ENCODE measurements at regions of chr6 and their contacts with region 1.

Region 1: DNA sequence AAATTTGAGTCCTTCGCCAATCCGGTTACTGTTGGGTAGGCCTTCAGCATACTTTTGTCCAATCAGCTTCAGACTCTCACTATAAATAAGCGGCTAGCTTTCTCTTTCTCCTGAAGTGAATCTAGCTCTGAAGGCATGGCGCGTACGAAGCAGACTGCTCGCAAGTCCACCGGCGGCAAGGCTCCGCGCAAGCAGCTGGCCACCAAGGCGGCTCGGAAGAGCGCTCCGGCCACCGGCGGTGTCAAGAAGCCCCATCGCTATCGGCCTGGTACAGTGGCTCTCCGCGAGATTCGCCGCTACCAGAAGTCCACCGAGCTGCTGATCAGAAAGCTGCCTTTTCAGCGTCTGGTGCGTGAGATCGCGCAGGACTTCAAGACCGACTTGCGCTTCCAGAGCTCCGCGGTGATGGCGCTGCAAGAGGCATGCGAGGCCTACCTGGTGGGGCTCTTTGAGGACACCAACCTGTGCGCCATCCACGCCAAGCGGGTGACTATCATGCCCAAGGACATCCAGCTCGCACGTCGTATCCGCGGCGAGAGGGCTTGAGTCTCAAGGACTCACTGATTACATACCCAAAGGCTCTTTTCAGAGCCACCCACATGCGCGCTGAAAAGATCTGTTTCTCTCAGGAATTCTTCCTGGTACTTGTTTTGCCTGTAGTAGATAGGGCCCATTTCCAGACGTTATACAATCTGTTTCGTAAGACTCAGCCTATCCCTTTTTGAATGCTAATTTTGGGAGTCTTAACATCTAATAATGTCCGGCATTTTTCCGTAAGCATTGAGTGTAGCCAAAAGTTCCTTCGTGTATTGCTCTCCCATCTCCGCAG is 102.0 kb downstream of the OR2B2 start:
- DNase-seq: peak; percentile 78
- ATAC-seq: peak; percentile 38
- H3K4me3 Mint-ChIP-seq: peak overlapping the region; percentile 88
- H3K27ac Mint-ChIP-seq: peak overlapping the region; percentile 87
- H3K4me1 Mint-ChIP-seq: peaks cover 56% of the 10 kb centered on the region
- H3K27me3 Mint-ChIP-seq: no peaks in the 10 kb centered on the region
- CTCF ChIP-seq: no peak

Region 2: GRCh38 chr6:27138837-27139755 is 671.1 kb before region 1 on chr6:
- CTCF ChIA-PET with region 1: no interaction called
- POLR2A ChIA-PET with region 1: interaction called, 233 read pairs
- intact Hi-C with region 1: loop called (anchors 5 kb)
- DNase-seq: peak; percentile 83
- ATAC-seq: peak; percentile 80
- H3K4me3 Mint-ChIP-seq: peak overlapping the region; percentile 95
- H3K27ac Mint-ChIP-seq: peak overlapping the region; percentile 98
- H3K4me1 Mint-ChIP-seq: peaks cover 33% of the 10 kb centered on the region
- H3K27me3 Mint-ChIP-seq: no peaks in the 10 kb centered on the region
- CTCF ChIP-seq: no peak

Region 3: DNA sequence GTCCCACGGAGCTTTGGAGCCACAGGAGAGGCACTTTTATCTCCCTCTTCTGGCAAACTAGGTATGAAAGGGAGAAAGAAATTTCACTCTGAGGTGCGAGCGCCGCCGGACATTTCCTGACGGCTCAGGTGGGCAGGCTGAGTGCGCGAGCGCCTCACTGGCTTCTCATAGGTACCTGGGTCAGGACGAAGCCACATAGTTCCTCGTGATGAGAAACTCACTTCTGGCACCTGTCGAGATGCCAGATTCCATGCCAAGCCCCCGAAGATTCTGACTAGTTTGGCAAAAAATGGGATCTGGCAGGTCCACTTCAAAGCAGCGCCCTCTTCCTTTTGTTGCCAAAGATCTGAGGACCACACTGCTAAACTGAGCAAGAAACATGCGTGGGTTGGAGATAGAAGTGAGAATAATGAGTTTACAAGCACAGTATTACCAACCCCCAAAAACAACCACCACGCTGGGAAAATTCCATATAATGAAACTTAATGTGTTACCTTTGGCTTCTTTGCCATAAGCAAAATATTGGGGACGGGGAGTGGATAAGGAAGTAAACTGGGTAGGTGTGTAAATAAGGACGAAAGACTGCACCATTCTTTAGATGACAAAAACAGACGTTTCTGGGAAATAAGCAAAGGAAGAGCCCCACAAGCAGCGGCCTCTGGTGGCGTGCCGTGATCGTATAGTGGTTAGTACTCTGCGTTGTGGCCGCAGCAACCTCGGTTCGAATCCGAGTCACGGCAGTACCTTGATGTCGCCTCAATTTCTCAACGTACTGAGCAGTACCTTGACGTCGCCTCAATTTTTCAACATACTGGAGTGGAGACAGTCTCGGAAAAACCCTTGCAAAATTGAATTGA is 652.5 kb before region 1 on chr6:
- CTCF ChIA-PET with region 1: no interaction called
- POLR2A ChIA-PET with region 1: interaction called, 13 read pairs
- intact Hi-C with region 1: no loop called
- DNase-seq: peak; percentile 92
- ATAC-seq: peak; percentile 80
- H3K4me3 Mint-ChIP-seq: peak overlapping the region; percentile 76
- H3K27ac Mint-ChIP-seq: peak overlapping the region; percentile 77
- H3K4me1 Mint-ChIP-seq: peaks cover 47% of the 10 kb centered on the region
- H3K27me3 Mint-ChIP-seq: no peaks in the 10 kb centered on the region
- CTCF ChIP-seq: peak; percentile 36

Region 4: DNA sequence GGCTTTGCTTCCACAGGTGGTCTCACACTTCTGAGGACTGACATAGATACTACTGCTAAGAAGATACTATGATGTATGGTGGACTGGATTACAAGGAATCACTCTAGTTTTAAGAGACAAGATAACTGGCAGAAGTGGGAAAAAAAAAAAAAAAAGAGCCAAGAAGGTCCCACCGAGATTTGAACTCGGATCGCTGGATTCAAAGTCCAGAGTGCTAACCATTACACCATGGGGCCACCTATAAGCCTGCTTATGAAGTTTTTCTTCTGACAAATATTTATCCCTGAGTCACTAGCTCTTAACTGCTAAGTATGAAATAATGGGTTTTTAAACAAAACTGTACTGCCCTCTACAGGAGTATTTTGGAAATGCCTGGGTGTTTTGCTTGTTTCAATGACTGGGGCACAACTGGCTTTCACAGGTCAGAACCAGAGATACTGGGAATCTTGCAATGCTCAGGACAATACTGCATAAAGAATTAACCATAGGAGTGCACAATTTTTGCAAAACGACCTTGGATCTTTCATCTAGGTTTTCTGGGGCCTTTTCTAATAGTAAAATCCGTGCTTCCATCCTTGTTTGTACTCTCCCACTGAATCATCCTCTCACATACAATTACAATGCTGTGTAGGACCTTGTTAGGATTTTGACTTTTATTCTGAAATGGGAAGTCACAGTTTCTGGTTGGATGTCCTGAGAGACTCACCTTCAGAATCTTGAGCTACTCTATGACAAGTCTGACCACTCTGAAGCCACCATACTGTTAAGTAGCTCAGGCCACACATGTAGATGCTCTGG is 14.3 kb before region 1 on chr6:
- CTCF ChIA-PET with region 1: interaction called, 28 read pairs
- POLR2A ChIA-PET with region 1: interaction called, 17 read pairs
- intact Hi-C with region 1: no loop called
- DNase-seq: peak; percentile 68
- ATAC-seq: peak; percentile 69
- H3K4me3 Mint-ChIP-seq: no peak overlapping the region
- H3K27ac Mint-ChIP-seq: no peak overlapping the region
- H3K4me1 Mint-ChIP-seq: peaks cover 30% of the 10 kb centered on the region
- H3K27me3 Mint-ChIP-seq: peaks cover 10% of the 10 kb centered on the region
- CTCF ChIP-seq: peak; percentile 72

Region 5: GRCh38 chr6:27825025-27825793 is 15.1 kb after region 1 on chr6:
- CTCF ChIA-PET with region 1: interaction called, 3 read pairs
- POLR2A ChIA-PET with region 1: interaction called, 234 read pairs
- intact Hi-C with region 1: no loop called
- DNase-seq: no peak
- ATAC-seq: peak; percentile 1
- H3K4me3 Mint-ChIP-seq: peak overlapping the region; percentile 91
- H3K27ac Mint-ChIP-seq: peak overlapping the region; percentile 99
- H3K4me1 Mint-ChIP-seq: peaks cover 25% of the 10 kb centered on the region
- H3K27me3 Mint-ChIP-seq: no peaks in the 10 kb centered on the region
- CTCF ChIP-seq: no peak

Region 6: DNA sequence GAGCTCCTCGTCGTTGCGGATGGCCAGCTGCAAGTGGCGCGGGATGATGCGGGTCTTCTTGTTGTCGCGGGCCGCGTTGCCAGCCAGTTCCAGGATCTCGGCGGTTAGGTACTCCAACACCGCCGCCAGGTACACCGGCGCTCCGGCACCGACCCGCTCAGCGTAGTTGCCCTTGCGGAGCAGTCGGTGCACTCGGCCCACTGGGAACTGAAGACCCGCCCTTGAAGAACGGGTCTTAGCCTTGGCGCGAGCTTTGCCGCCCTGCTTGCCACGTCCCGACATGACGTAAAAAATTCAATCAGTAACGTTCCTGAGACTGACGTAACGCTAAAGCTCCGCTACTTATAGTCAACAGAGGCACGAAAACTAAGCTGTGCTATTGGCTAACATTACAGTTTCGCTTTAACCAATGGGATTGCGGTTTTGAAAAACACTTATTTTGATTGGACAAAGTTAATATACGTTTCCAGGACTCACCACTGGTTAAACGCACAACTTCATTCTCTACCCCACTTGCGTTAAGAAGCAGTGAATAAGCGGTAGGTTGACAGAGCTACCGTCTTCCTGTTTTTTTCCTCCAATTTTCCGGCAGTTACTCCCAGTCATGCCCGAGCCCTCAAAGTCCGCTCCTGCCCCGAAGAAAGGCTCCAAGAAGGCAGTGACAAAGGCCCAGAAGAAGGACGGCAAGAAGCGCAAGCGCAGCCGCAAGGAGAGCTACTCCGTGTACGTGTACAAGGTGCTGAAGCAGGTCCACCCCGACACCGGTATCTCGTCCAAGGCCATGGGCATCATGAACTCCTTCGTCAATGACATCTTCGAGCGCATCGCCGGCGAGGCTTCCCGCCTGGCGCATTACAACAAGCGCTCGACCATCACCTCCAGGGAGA is 28.1 kb after region 1 on chr6:
- CTCF ChIA-PET with region 1: interaction called, 17 read pairs
- POLR2A ChIA-PET with region 1: interaction called, 272 read pairs
- intact Hi-C with region 1: no loop called
- DNase-seq: peak; percentile 87
- ATAC-seq: peak; percentile 73
- H3K4me3 Mint-ChIP-seq: no peak overlapping the region
- H3K27ac Mint-ChIP-seq: no peak overlapping the region
- H3K4me1 Mint-ChIP-seq: peaks cover 20% of the 10 kb centered on the region
- H3K27me3 Mint-ChIP-seq: no peaks in the 10 kb centered on the region
- CTCF ChIP-seq: no peak

Measured in activated CD8-positive, alpha-beta T cell treated with anti-CD3 and anti-CD28 coated beads for 36 hours (primary cell).